Naive thymus-derived CD8-positive, alpha-beta T cell (primary cell): ENCODE measurements at regions of chr1 and their contacts with region 1.

Region 1: GRCh38 chr1:110645821-110646735 is 28.7 kb downstream of the KCNA3 start:
- DNase-seq: no peak
- ATAC-seq: no peak
- H3K4me3 Mint-ChIP-seq: peak overlapping the region in 4 of 10 donors; percentile 6 to 22 (median 12)
- H3K27ac Mint-ChIP-seq: peak overlapping the region in 5 of 10 donors; percentile 38 to 77 (median 64)
- H3K4me1 Mint-ChIP-seq: peaks cover 19 to 54% (median 38%) of the 10 kb centered on the region in 4 donors
- H3K27me3 Mint-ChIP-seq: no peaks in the 10 kb centered on the region

Region 2: GRCh38 chr1:110594456-110595352 is 51.4 kb before region 1 on chr1:
- POLR2A ChIA-PET with region 1: no interaction called
- DNase-seq: no peak
- ATAC-seq: no peak
- H3K4me3 Mint-ChIP-seq: no peak overlapping the region
- H3K27ac Mint-ChIP-seq: no peak overlapping the region
- H3K4me1 Mint-ChIP-seq: peaks cover 0 to 2% (median 0%) of the 10 kb centered on the region in 4 donors
- H3K27me3 Mint-ChIP-seq: peaks cover 3 to 17% (median 11%) of the 10 kb centered on the region in 5 donors

Region 3: DNA sequence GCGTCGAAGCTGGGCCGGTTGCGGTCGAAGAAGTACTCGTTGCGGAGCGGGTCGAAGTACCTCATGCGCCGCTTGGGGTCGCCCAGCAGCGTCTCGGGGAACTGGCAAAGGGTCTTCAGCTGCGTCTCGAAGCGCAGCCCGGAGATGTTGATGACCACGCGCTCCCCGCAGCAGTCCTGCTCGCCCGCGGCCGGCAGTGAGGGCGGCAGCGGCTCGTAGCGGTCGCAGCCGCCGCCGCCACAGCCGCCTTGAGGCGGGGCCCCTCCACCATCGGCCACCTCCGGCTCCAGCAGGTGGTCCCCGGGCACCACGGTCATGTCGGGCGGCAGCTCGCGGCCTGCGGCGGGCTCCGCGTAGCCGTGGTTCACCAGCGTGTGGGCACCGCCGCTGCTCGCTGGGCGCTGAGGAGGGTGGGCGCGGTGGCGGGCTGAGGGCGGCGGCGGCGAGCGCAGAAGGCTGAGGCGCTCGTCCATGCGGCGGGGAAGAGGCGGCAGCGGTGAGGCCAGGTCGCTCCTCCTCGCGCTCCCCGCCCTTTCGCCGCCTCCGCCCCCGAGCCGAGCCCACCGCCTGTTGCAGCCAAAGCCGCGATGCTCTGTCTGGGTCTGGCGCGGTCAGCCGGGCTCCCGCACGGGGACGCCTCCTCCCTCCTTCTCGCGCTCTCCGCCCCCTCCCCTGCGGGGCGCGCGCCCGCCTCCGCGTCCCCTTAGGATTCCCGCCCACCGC is 28.4 kb after region 1 on chr1 and contains the start of gene KCNA3:
- POLR2A ChIA-PET with region 1: interaction called, 28 read pairs
- DNase-seq: peak; percentile 59 to 82 (median 69)
- ATAC-seq: peak; percentile 26 to 42
- H3K4me3 Mint-ChIP-seq: peak within 1 kb of the TSS; percentile 91 to 100 (median 98)
- H3K27ac Mint-ChIP-seq: peak within 1 kb of the TSS; percentile 93 to 100 (median 99)
- H3K4me1 Mint-ChIP-seq: peaks cover 26 to 59% (median 44%) of the 10 kb centered on the region in 4 donors
- H3K27me3 Mint-ChIP-seq: no peaks in the 10 kb centered on the region
- polyA plus RNA-seq, gene KCNA3: 55.6 to 67.9 (median 66.4) TPM

Region 4: GRCh38 chr1:110816930-110817329 is 170.9 kb after region 1 on chr1:
- POLR2A ChIA-PET with region 1: no interaction called
- DNase-seq: no peak
- ATAC-seq: no peak
- H3K4me3 Mint-ChIP-seq: no peak overlapping the region
- H3K27ac Mint-ChIP-seq: peak overlapping the region in 1 of 10 donors; percentile 2
- H3K4me1 Mint-ChIP-seq: peaks cover 0 to 5% (median 1%) of the 10 kb centered on the region in 4 donors
- H3K27me3 Mint-ChIP-seq: peaks cover 0 to 3% (median 0%) of the 10 kb centered on the region in 5 donors